ENCODE measurements at regions of chr2 and their contacts with region 1.

Region 1: GRCh38 chr2:156589381-156590079 is 153.4 kb downstream of the GPD2 start:
- DNase-seq: peak; percentile 10
- H3K4me3 Mint-ChIP-seq: no peak overlapping the region
- H3K27ac Mint-ChIP-seq: no peak overlapping the region
- H3K4me1 Mint-ChIP-seq: peaks cover 4% of the 10 kb centered on the region
- H3K27me3 Mint-ChIP-seq: no peaks in the 10 kb centered on the region

Region 2: GRCh38 chr2:156065905-156066304 is 523.6 kb before region 1 on chr2:
- CTCF ChIA-PET with region 1: interaction called, 3 read pairs
- POLR2A ChIA-PET with region 1: no interaction called
- intact Hi-C with region 1: loop called (anchors 5 kb)
- DNase-seq: no peak
- H3K4me3 Mint-ChIP-seq: no peak overlapping the region
- H3K27ac Mint-ChIP-seq: no peak overlapping the region
- H3K4me1 Mint-ChIP-seq: no peaks in the 10 kb centered on the region
- H3K27me3 Mint-ChIP-seq: peaks cover 2% of the 10 kb centered on the region

Region 3: DNA sequence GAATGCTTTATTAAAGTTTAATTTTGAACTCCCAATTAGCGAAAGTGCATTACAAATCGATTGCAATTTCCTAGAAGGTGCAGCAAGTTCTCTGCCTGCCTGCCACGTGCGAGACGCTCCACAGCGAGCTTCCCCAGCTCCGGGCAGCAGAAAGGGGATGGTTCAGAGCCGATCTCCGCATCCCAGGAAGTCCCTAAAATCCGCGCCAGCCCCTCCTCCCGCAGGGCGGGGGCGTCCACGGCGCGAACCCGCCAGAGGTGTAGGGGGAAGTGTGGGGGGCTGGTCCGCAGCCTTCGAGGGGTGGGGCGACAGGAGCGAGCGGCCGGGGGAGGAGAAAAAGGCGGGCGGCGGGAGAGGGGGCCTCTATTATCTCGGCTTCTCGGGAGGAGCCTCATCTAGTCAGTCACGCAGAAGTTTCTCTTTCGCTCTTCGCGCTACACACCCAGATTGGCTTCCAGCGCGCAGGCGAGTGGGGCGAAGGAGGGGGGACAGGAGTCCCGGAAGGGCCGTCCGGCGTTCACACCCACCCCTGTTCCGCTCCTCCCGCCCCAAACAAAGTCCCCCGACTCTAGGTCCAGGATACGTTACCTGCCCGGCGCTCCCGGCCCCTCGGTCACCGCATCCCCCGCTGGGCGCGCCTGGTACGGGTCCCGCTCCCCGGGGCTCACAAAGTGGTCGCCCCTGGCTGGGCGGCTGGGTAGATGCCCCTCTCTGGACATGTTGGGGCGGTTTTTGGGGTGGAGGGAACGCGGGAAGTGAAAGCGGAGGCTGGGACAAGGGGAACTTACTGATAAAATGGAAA is 247.9 kb before region 1 on chr2:
- CTCF ChIA-PET with region 1: interaction called, 62 read pairs
- POLR2A ChIA-PET with region 1: no interaction called
- intact Hi-C with region 1: no loop called
- DNase-seq: peak; percentile 93
- H3K4me3 Mint-ChIP-seq: peak overlapping the region; percentile 94
- H3K27ac Mint-ChIP-seq: peak overlapping the region; percentile 99
- H3K4me1 Mint-ChIP-seq: peaks cover 47% of the 10 kb centered on the region
- H3K27me3 Mint-ChIP-seq: no peaks in the 10 kb centered on the region

Region 4: DNA sequence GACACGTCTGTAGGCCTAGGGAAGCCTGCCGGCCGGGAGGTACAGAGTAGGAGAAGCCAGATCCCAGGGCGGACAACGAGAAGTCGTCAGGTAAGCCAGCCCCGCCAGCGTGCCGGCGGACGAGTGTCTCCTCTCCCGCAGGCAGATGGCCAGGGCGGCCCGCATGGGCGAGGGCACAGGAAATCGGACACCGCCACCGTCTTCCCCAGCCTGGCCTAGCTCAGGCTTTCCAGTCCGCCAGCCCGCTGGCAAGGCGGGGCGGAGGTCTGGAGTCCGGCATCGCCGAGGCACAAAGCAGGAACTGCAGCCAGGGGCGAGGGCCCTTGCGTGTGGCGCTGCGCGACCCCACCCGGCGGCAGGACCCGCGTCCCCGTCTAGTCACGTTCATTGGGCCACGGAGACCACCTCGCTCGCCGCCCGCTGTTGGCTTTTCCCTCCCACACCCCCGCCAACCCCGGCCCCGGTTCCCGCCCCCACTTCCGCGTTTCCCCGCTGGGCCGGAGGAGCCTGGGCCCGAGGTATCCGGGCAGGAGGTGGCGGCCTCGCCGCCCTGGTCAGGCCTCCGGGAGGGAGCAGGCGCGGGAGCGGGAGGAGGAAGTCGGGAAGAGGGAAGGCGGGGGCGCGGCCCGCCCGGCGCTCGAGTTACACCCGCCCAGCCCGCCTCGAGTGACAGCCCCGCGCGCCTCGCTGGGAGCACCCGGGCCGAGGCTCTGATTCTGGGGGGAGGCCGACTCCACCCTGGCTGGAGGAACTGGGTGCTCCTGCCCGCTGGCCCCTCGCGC is 153.6 kb before region 1 on chr2 and contains the start of gene GPD2:
- CTCF ChIA-PET with region 1: interaction called, 8 read pairs
- POLR2A ChIA-PET with region 1: no interaction called
- intact Hi-C with region 1: loop called (anchors 5 kb)
- DNase-seq: peak; percentile 67
- H3K4me3 Mint-ChIP-seq: peak within 1 kb of the TSS; percentile 89
- H3K27ac Mint-ChIP-seq: peak within 1 kb of the TSS; percentile 82
- H3K4me1 Mint-ChIP-seq: peaks cover 28% of the 10 kb centered on the region
- H3K27me3 Mint-ChIP-seq: no peaks in the 10 kb centered on the region
- total RNA-seq, gene GPD2: 27.3 to 28.6 TPM

Region 5: DNA sequence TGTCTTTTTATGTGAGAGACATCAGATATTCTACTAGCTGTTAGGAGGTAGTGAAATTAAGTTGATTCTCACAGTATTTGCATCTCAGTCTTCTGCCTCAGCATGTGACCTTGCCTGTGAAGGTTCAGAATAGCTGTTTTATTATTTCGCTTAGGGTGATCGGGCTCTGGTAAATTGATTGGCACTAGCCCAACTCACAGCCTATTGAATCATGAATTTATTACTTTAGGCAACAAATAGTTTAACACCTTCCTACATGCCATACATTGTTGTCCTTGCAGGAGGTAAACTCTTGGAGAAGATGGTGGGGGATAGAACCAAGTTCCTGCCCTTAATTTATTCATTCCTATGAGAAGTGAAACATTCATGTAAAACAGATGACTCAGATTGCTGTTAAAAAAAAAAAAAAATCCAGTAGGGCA is 51.4 kb before region 1 on chr2:
- CTCF ChIA-PET with region 1: no interaction called
- POLR2A ChIA-PET with region 1: no interaction called
- intact Hi-C with region 1: no loop called
- DNase-seq: no peak
- H3K4me3 Mint-ChIP-seq: no peak overlapping the region
- H3K27ac Mint-ChIP-seq: no peak overlapping the region
- H3K4me1 Mint-ChIP-seq: peaks cover 24% of the 10 kb centered on the region
- H3K27me3 Mint-ChIP-seq: no peaks in the 10 kb centered on the region

Region 6: DNA sequence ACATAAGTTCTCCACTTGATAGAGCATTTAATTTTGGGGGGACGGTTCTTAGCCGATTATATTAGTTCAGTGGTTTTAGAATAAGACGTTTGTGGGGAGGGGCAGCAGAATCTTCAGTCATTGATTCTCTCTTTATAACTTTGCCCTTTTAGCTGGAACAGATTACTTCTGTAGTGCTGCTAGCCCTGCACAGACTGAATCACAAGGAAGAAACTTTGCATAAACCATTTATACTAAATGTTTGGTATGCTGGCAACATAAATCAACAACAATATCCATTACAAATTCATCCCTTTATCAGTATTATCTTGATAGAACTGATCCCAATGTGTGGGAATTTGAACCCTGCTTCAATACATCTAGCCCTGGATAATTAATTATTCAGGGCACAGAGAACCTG is 41.1 kb before region 1 on chr2:
- CTCF ChIA-PET with region 1: no interaction called
- POLR2A ChIA-PET with region 1: no interaction called
- intact Hi-C with region 1: no loop called
- DNase-seq: no peak
- H3K4me3 Mint-ChIP-seq: no peak overlapping the region
- H3K27ac Mint-ChIP-seq: no peak overlapping the region
- H3K4me1 Mint-ChIP-seq: peaks cover under 1% of the 10 kb centered on the region
- H3K27me3 Mint-ChIP-seq: no peaks in the 10 kb centered on the region

Region 7: GRCh38 chr2:156803967-156804366 is 214.4 kb after region 1 on chr2:
- CTCF ChIA-PET with region 1: no interaction called
- POLR2A ChIA-PET with region 1: no interaction called
- intact Hi-C with region 1: no loop called
- DNase-seq: no peak
- H3K4me3 Mint-ChIP-seq: no peak overlapping the region
- H3K27ac Mint-ChIP-seq: no peak overlapping the region
- H3K4me1 Mint-ChIP-seq: no peaks in the 10 kb centered on the region
- H3K27me3 Mint-ChIP-seq: no peaks in the 10 kb centered on the region

Region 8: GRCh38 chr2:157194097-157194688 is 604.7 kb after region 1 on chr2:
- CTCF ChIA-PET with region 1: interaction called, 4 read pairs
- POLR2A ChIA-PET with region 1: no interaction called
- intact Hi-C with region 1: loop called (anchors 5 kb)
- DNase-seq: peak; percentile 13
- H3K4me3 Mint-ChIP-seq: no peak overlapping the region
- H3K27ac Mint-ChIP-seq: no peak overlapping the region
- H3K4me1 Mint-ChIP-seq: peaks cover 1% of the 10 kb centered on the region
- H3K27me3 Mint-ChIP-seq: peaks cover 7% of the 10 kb centered on the region

Region 9: DNA sequence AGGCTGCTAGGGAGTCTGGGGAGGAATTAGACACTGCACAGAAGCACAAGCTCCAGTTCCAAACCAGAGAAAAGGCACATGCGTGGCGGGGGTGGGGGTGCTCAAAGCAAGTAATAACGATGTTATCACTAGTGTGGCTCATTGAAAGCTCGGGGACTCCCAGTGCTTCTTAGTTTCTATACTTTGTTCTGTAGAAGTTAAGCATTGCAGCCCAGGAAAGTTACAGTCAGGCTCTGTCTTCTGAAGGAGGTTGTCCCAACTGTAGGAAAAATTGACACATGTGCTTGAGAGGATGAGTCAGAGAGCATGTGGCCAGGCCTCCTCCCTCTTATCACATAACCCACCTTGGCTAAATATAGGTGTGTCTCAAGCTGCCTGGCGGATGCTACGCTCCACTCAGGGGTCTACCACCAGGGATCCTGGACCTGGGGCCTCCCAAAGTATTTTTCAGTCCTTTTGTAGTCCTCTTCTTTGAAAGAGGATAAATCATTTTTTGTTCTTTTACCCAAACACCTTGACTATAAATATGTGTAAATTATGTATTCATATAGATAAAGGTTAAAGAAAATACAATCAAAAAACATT is 671.8 kb after region 1 on chr2:
- CTCF ChIA-PET with region 1: no interaction called
- POLR2A ChIA-PET with region 1: no interaction called
- intact Hi-C with region 1: no loop called
- DNase-seq: peak; percentile 81
- H3K4me3 Mint-ChIP-seq: no peak overlapping the region
- H3K27ac Mint-ChIP-seq: peak overlapping the region; percentile 18
- H3K4me1 Mint-ChIP-seq: peaks cover 19% of the 10 kb centered on the region
- H3K27me3 Mint-ChIP-seq: peaks cover 5% of the 10 kb centered on the region